ENCODE measurements at regions of chr17 and their contacts with region 1.

Region 1: GRCh38 chr17:68884888-68885287 is 70.3 kb downstream of the ABCA8 start:
- DNase-seq: no peak
- ATAC-seq: no peak

Region 2: DNA sequence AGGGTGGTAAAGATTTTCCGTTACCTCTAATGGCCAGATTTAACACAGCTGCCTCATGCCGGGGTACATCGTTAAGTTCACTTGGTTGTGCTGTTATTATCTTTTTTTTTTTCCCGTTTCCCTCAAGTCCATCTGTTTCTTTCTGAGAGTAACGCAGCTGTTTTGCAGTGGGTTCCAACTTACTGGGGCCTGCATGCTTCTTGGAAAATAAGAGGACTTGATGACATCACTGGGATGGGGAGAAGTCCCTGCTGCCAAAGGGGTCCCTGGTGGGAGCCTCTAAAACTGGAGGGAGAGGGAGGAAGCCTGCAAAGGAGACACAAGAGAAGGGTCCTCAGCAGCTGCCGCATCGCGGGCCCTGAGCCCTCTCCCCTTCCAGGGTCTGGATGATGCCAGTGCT is 1244.9 kb before region 1 on chr17:
- intact Hi-C with region 1: loop called (anchors 5 kb)
- DNase-seq: no peak
- ATAC-seq: peak; percentile 63

Region 3: GRCh38 chr17:68533887-68534694 is 350.8 kb before region 1 on chr17:
- intact Hi-C with region 1: no loop called
- DNase-seq: no peak
- ATAC-seq: peak; percentile 55

Region 4: DNA sequence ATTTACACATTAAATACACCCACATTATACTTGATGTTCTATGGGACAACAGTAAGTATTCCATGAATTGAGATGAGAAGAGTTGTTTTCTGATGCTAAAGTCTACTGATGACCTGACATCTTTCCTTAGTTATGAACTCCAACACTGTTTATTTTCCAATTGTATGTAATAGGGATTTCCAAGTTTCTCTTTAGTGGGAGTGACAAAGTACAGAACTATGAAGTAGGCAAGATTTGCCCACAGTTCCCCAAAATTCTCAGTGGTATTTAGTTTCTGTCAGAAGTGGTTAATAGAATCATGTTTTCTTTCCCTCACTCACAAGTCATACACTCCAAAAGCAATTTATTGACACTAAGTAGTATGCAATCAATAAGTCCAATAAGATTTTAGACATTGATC is 279.3 kb after region 1 on chr17:
- intact Hi-C with region 1: no loop called
- DNase-seq: no peak
- ATAC-seq: no peak